ENCODE measurements at regions of chr1 and their contacts with region 1.

Region 1: GRCh38 chr1:100249537-100250257 is at the start of gene DBT:
- DNase-seq: peak; percentile 77 to 96 (median 92)
- ATAC-seq: peak; percentile 100
- H3K4me3 ChIP-seq: peak within 1 kb of the TSS; percentile 68 to 92
- H3K4me3 Mint-ChIP-seq: no peak within 1 kb of the TSS
- H3K27ac ChIP-seq: peak within 1 kb of the TSS; percentile 71 to 87
- H3K27ac Mint-ChIP-seq: no peak within 1 kb of the TSS
- H3K4me1 ChIP-seq: peaks cover 20% of the 10 kb centered on the region
- H3K4me1 Mint-ChIP-seq: peaks cover 18% of the 10 kb centered on the region
- H3K27me3 ChIP-seq: no peaks in the 10 kb centered on the region
- H3K27me3 Mint-ChIP-seq: no peaks in the 10 kb centered on the region
- CTCF ChIP-seq: no peak
- total RNA-seq, gene DBT: 4.6 to 4.9 TPM

Region 2: DNA sequence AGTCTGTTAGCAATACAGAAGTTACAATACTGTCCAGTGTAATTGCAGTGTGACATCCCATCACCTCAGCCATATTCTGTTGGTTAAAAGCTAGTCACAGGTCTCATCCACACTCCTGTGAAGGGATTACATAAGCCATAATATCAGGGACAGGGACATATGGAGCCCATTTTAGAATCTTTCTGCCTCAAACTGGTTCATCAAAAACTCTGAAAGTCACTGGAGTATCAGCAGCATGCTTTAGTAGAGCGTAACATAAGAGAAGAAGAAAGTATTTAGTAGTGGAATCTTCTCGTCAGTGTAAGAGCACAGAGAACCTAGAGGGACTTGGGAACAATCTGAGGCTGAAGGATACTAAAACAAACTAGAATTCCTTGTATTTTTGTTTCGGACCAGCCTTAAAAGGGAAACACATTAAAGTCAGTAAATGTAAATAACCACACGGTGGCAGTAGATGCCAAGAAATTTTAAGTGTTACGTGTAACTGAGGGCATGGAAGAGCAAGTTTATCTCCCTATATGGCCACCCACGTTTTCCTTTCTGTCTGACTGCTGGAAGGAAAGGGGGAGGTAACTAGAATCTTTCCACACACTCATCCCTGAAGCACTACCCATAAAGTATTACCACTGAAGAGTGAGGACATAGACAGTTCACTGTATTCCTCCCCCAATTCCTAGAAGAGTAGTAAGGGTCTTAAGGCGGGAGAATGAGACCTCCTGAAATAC is 441.1 kb before region 1 on chr1:
- CTCF ChIA-PET with region 1: no interaction called
- POLR2A ChIA-PET with region 1: no interaction called
- intact Hi-C with region 1: loop called in 1 of 2 experiments (anchors 10 kb)
- DNase-seq: peak in 4 of 9 experiments; percentile 15 to 81 (median 54)
- ATAC-seq: peak; percentile 79
- H3K4me3 ChIP-seq: no peak overlapping the region
- H3K4me3 Mint-ChIP-seq: no peak overlapping the region
- H3K27ac ChIP-seq: no peak overlapping the region
- H3K27ac Mint-ChIP-seq: no peak overlapping the region
- H3K4me1 ChIP-seq: no peaks in the 10 kb centered on the region
- H3K4me1 Mint-ChIP-seq: peaks cover 4% of the 10 kb centered on the region
- H3K27me3 ChIP-seq: peaks cover 0 to 2% of the 10 kb centered on the region in 2 experiments
- H3K27me3 Mint-ChIP-seq: peaks cover 3% of the 10 kb centered on the region
- CTCF ChIP-seq: peak; percentile 85

Region 3: GRCh38 chr1:100443811-100444571 is 194.3 kb after region 1 on chr1:
- CTCF ChIA-PET with region 1: no interaction called
- POLR2A ChIA-PET with region 1: no interaction called
- intact Hi-C with region 1: no loop called
- DNase-seq: peak in 5 of 9 experiments; percentile 18 to 75 (median 39)
- ATAC-seq: peak; percentile 35
- H3K4me3 ChIP-seq: peak overlapping the region in 1 of 2 experiments; percentile 25
- H3K4me3 Mint-ChIP-seq: peak overlapping the region; percentile 71
- H3K27ac ChIP-seq: peak overlapping the region; percentile 73 to 88
- H3K27ac Mint-ChIP-seq: peak overlapping the region; percentile 97
- H3K4me1 ChIP-seq: peaks cover 71% of the 10 kb centered on the region
- H3K4me1 Mint-ChIP-seq: peaks cover 84% of the 10 kb centered on the region
- H3K27me3 ChIP-seq: no peaks in the 10 kb centered on the region
- H3K27me3 Mint-ChIP-seq: no peaks in the 10 kb centered on the region
- CTCF ChIP-seq: no peak